ENCODE measurements at regions of chr3 and their contacts with region 1.

Region 1: DNA sequence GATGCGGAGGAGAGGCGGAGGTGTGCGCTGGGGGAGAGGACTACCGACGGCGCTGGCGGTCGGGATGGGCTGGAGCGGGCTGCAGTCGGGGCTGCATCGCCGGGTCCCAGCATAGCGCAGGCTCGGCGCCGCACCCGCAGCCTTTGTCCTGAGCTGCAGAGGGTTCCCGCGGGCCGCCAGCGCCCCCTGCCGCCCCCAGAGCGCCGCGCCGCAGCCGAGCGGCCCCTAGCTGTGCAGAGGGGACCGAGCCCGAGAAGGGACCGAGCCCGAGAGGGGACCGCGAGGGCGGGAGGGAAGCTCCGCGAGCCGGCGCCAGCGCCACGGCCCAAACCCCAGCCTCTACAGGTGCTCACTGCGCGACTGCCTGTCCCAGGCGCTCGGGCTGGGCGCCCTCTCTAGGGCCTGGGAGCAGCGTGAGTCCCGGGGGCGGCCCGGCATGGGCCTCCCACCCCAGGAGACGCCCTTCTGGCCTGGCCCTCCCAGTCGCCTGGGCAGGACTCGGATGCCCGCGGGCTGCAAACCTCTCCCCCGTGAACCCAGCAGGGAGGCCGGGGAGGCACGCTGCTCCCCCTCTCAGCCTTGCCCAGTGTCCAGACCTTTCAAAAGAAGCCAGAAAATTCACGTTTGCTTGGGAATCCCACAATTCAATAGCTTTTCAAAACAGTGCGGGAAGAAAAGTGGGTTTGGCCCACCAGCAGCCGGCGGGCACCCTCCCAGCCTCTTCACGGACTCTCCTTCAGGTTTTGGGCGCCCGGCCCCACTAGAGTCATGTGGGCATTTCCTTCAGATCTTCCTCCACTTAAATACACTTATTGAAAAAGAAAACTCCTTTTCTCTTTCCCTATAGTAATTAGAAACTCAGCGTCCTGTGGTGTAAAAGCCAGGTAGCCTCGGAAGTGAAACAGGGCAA is 134.7 kb downstream of the TPRA1 start:
- DNase-seq: peak; percentile 47 to 73
- ATAC-seq: peak; percentile 83 to 94 (median 89)
- H3K4me3 ChIP-seq: peak overlapping the region in 9 of 10 donors; percentile 12 to 42 (median 35)
- H3K27ac ChIP-seq: no peak overlapping the region
- H3K4me1 ChIP-seq: peaks cover 6 to 26% (median 21%) of the 10 kb centered on the region in 9 donors
- H3K27me3 ChIP-seq: peaks cover 15 to 78% (median 70%) of the 10 kb centered on the region in 7 donors
- CTCF ChIP-seq: peak; percentile 72 to 98 (median 92)

Region 2: DNA sequence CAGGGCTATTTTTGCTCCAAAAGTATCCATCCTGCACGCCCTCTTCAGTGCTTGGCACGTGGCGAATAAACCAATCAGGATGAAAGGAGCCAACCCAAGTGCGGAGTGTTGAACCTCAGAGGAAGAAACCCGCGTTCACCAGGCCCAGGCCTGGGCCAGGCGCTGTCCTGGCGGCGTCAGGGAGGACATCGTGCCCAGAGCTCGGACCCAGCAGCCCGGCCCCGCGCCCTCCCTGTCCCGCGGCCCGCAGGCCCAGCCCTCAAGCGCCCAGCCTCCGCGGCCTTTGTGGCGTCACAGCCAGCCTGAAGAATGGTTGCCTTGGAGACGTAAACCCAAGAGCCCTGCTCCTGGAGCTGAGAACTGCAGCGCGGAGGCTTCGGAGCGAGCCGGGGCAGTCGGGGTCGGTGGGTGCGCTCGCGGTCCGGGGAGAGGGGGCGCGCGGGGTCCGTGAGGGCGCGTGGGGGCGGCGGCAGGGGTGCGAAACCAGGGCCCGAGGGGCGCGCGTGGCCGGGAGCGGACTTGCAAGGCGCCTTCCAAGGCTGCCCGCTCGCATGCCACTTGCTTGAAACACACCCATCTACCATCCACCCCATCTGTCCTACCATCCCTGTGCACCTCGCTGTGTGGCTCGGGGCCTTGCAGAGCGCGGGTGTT is 1061.1 kb before region 1 on chr3 and contains the start of gene CFAP100:
- intact Hi-C with region 1: no loop called
- DNase-seq: peak; percentile 25 to 41
- ATAC-seq: peak; percentile 4 to 81 (median 62)
- H3K4me3 ChIP-seq: peak within 1 kb of the TSS in 9 of 10 donors; percentile 14 to 43 (median 34)
- H3K27ac ChIP-seq: no peak within 1 kb of the TSS
- H3K4me1 ChIP-seq: peaks cover 0 to 9% (median 3%) of the 10 kb centered on the region in 9 donors
- H3K27me3 ChIP-seq: peaks cover 0 to 42% (median 14%) of the 10 kb centered on the region in 7 donors
- CTCF ChIP-seq: no peak
- total RNA-seq, gene CFAP100: not detected

Region 3: GRCh38 chr3:126522363-126522788 is 933.4 kb before region 1 on chr3:
- intact Hi-C with region 1: loop called in 4 of 10 experiments (anchors 10 kb)
- DNase-seq: peak in 1 of 2 donors; percentile 39
- ATAC-seq: peak in 5 of 8 donors; percentile 6 to 60 (median 47)
- H3K4me3 ChIP-seq: no peak overlapping the region
- H3K27ac ChIP-seq: no peak overlapping the region
- H3K4me1 ChIP-seq: peaks cover 0 to 13% (median 6%) of the 10 kb centered on the region in 9 donors
- H3K27me3 ChIP-seq: peaks cover 0 to 24% (median 16%) of the 10 kb centered on the region in 7 donors
- CTCF ChIP-seq: peak; percentile 78 to 96 (median 90)

Region 4: DNA sequence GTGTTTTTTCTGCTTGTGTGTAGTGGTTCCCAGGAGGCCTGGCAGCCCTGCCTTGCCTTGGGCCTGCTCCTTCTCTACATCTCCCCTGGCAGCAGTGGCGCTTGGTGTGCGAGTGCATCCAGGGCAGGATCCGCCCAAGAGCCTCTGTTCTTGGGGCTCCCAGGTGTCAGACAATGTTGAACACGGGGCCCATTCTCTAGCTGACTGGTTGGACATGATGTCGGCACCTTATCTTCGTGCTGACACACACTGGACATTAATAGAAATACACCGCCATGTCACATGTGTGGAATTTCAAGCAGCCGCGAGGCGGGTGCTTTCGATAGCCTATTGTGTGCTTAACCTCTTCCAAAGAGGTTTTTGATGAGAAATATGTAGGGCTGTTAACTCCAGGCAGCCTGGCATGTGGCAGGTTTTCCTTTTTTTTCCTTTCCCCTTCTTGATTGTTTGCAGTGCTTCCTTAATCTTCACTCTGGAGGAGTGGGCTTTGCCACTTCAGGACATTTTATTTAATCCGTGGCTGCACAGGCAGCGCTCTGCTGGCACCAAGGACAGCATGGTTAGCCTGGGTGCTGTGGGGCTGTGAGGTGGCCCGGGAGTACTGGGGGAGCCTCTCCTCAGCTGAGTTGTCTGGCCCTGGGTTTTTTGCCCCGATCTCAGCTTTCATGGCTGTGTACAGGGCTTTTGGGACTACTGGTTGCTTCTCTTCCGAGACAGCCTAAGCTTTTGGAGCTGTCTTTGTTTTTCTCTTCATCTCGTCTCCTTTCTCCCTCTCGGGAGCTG is 709.2 kb before region 1 on chr3:
- intact Hi-C with region 1: loop called in 5 of 10 experiments (anchors 5 to 10 kb)
- DNase-seq: peak; percentile 58 to 75
- ATAC-seq: peak; percentile 86 to 93 (median 91)
- H3K4me3 ChIP-seq: peak overlapping the region in 4 of 10 donors; percentile 2 to 20 (median 8)
- H3K27ac ChIP-seq: peak overlapping the region; percentile 67 to 91 (median 88)
- H3K4me1 ChIP-seq: peaks cover 0 to 49% (median 17%) of the 10 kb centered on the region in 9 donors
- H3K27me3 ChIP-seq: no peaks in the 10 kb centered on the region
- CTCF ChIP-seq: peak in 2 of 9 donors; percentile 11 to 21

Region 5: DNA sequence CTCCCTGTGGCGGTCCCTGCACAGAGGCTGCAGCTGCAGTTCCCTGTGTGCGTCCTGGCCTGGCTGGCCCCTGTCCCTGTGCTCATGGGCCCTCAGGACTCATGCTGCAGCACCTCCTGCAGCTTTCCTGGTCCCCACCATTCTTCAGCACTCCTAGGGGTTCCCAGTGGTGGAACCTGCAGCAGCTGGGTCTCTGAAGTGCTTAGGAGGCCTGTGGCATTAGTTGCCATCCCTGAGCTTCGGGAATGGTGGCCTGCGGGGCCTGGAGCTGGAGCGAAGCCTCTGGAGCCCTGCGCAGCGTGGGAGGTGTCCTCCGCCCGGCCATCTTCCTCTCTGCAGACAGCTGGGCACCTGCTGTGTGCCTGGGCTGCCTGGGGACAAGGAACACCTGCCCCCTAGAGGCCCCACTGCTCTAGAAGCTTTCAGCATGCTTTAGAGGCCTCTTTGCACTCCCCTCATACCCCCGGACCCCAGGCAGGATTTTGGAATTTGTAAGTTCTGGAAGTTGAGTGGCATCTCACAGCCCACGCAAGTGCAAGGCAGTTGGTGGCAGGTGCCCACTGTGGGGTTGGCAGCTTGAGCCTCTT is 459.8 kb before region 1 on chr3:
- intact Hi-C with region 1: loop called in 2 of 10 experiments (anchors 10 kb)
- DNase-seq: no peak
- ATAC-seq: no peak
- H3K4me3 ChIP-seq: no peak overlapping the region
- H3K27ac ChIP-seq: peak overlapping the region in 1 of 10 donors; percentile 77
- H3K4me1 ChIP-seq: peaks cover 30 to 99% (median 66%) of the 10 kb centered on the region in 9 donors
- H3K27me3 ChIP-seq: no peaks in the 10 kb centered on the region
- CTCF ChIP-seq: peak in 1 of 9 donors; percentile 17

Measured in heart right ventricle (tissue), 16 donors.